ENCODE measurements at regions of chr20 and their contacts with region 1.

Region 1: GRCh38 chr20:31605031-31605901 is at the start of gene ID1:
- DNase-seq: peak; percentile 98 to 99 (median 99)
- H3K4me3 ChIP-seq: peak within 1 kb of the TSS; percentile 85 to 95 (median 93)
- H3K27ac ChIP-seq: peak within 1 kb of the TSS; percentile 93 to 94
- H3K4me1 ChIP-seq: peaks cover 6 to 14% (median 13%) of the 10 kb centered on the region in 3 donors
- H3K27me3 ChIP-seq: no peaks in the 10 kb centered on the region
- CTCF ChIP-seq: no peak
- total RNA-seq, gene ID1: 189 TPM

Region 2: DNA sequence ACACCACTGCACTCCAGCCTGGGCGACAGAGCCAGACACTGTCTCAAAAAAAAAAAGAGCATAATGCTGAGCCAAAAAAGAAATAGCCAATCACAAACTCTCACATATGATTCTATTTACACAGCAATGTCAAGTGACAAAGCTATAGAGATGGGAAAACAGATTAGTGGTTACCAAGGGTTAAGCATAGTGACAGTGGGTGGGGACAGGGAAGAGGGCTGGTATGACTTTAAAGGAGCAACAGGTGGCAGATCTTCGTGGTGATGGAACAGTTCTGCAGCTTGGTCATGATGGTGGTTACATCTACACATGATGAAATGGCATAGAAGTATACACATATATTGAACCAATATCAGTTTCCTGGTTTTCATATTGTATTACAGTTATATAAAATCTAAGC is 223.5 kb before region 1 on chr20:
- intact Hi-C with region 1: no loop called
- DNase-seq: no peak
- H3K4me3 ChIP-seq: no peak overlapping the region
- H3K27ac ChIP-seq: no peak overlapping the region
- H3K4me1 ChIP-seq: no peaks in the 10 kb centered on the region
- H3K27me3 ChIP-seq: no peaks in the 10 kb centered on the region
- CTCF ChIP-seq: no peak

Region 3: GRCh38 chr20:31452575-31452974 is 152.7 kb before region 1 on chr20:
- intact Hi-C with region 1: no loop called
- DNase-seq: no peak
- H3K4me3 ChIP-seq: no peak overlapping the region
- H3K27ac ChIP-seq: no peak overlapping the region
- H3K4me1 ChIP-seq: no peaks in the 10 kb centered on the region
- H3K27me3 ChIP-seq: no peaks in the 10 kb centered on the region
- CTCF ChIP-seq: no peak

Region 4: DNA sequence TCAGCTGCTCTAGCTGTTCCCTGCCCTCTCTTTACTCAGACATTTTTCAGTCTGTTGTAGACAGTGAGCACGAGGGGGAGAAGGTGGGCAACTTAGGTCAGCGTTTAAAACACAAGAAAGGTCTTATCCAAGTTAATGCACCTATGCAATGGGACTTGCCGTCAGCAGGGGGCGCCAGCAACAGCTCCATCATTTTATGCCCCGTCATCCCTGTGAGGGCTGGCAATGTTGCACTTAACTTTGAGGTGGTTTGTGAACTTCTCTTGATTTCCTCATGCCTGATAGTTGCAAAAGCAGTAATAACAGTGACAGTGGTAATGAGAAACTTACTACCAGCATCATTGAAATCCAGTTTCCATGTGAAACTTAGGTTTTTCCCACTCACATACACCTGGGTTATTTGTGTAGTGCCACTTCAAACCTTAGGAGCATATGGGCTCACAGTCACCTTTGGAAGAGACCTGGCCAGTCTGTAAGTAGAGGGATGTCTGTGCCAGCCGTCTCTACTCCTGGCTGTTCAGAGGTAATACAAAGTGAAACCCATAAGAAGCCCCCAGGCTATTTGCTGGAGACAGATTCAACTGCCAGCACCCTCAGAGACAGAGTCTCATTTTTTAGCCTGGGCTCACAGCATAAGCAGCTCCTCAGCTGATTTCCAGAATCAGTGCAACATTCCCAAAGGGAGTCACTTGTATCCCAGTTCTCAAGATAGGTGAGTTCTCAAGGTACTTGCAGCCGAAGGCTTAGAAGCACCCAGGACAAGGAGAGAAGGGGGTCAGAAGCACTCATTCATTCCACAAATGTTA is 45.0 kb before region 1 on chr20:
- intact Hi-C with region 1: loop called (anchors 5 kb)
- DNase-seq: peak in 4 of 5 donors; percentile 63 to 73 (median 67)
- H3K4me3 ChIP-seq: no peak overlapping the region
- H3K27ac ChIP-seq: no peak overlapping the region
- H3K4me1 ChIP-seq: peaks cover 0 to 4% (median 4%) of the 10 kb centered on the region in 3 donors
- H3K27me3 ChIP-seq: no peaks in the 10 kb centered on the region
- CTCF ChIP-seq: peak; percentile 84

Measured in kidney (tissue), 22 donors.